Posterior vena cava (tissue), 2 donors: ENCODE measurements at regions of chr19 and their contacts with region 1.

Region 1: GRCh38 chr19:29753190-29753933 is 38.3 kb upstream of the C19orf12 start:
- DNase-seq: no peak

Region 2: GRCh38 chr19:30943101-30943843 is 1189.9 kb after region 1 on chr19:
- intact Hi-C with region 1: loop called in 1 of 2 experiments (anchors 5 kb)
- DNase-seq: no peak